Gastrocnemius medialis (tissue), 4 donors: ENCODE measurements at regions of chr5 and their contacts with region 1.

Region 1: GRCh38 chr5:91293131-91293530 is 90.0 kb downstream of the ARRDC3 start:
- DNase-seq: no peak
- ATAC-seq: no peak
- H3K4me3 ChIP-seq: no peak overlapping the region
- H3K27ac ChIP-seq: no peak overlapping the region
- H3K4me1 ChIP-seq: peaks cover 11 to 16% of the 10 kb centered on the region in 2 donors
- H3K27me3 ChIP-seq: no peaks in the 10 kb centered on the region
- CTCF ChIP-seq: no peak
- POLR2A ChIP-seq: no peak

Region 2: DNA sequence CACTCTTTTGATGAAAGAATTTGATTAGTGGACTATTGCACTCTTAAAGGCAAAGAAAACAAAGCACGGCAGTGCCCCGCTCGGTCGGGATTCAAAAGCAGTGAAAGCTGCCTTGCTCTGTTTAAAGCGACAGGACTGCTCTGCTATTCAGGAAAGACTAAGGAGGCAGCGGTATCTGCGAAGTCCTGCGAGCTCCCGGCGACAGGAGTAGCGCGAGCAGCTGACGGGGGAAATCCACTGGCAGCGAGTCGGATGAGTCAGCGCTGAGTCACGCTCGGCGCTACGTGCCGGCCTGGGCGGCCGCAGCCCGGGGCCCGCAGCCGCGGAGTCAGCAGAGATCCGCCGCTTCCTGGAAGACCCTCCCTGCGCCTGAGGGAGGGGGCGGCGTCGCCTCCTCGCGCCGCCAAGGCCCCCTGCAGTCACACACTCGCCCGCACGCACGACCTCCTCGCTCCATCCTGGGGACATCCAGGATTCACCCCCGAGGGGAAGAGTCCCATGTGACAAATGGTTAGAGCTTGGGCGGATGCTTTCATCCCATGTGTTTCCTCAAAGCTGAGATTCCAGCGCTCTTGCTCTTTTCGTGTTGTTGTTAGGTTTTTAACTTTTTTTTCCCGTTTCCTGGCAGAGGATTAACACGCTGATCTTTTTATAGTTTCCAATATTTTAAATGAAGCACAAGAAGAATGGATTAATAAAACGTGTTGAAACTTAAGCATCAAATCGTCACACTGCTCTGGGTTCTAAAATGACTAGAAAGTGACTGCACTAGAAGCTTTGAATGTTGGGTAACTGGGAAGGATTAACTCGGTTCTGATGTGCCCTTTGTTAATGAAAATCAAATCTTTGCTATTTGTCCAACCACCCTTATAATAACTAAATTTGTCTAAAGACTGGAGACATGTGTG is 12.5 kb before region 1 on chr5:
- in situ Hi-C with region 1: no loop called
- intact Hi-C with region 1: loop called (anchors 2 kb)
- DNase-seq: peak; percentile 91 to 93
- ATAC-seq: peak; percentile 96 to 97
- H3K4me3 ChIP-seq: peak overlapping the region; percentile 61 to 75 (median 72)
- H3K27ac ChIP-seq: peak overlapping the region; percentile 89 to 98 (median 94)
- H3K4me1 ChIP-seq: peaks cover 10% of the 10 kb centered on the region in 2 donors
- H3K27me3 ChIP-seq: no peaks in the 10 kb centered on the region
- CTCF ChIP-seq: peak in 1 of 5 experiments; percentile 14
- POLR2A ChIP-seq: peak; percentile 74 to 79

Region 3: GRCh38 chr5:91742550-91742949 is 449.4 kb after region 1 on chr5:
- in situ Hi-C with region 1: no loop called
- intact Hi-C with region 1: no loop called
- DNase-seq: no peak
- ATAC-seq: no peak
- H3K4me3 ChIP-seq: no peak overlapping the region
- H3K27ac ChIP-seq: no peak overlapping the region
- H3K4me1 ChIP-seq: no peaks in the 10 kb centered on the region
- H3K27me3 ChIP-seq: no peaks in the 10 kb centered on the region
- CTCF ChIP-seq: no peak
- POLR2A ChIP-seq: no peak